OCI-LY7 (cell line): ENCODE measurements at regions of chr7 and their contacts with region 1.

Region 1: GRCh38 chr7:24381894-24382505 is 98.0 kb downstream of the NPY start:
- DNase-seq: peak; percentile 79
- H3K4me3 ChIP-seq: no peak overlapping the region
- H3K27ac ChIP-seq: no peak overlapping the region
- H3K4me1 ChIP-seq: peaks cover 12% of the 10 kb centered on the region
- CTCF ChIP-seq: peak; percentile 93

Region 2: GRCh38 chr7:23570592-23571200 is 811.3 kb before region 1 on chr7:
- CTCF ChIA-PET with region 1: no interaction called
- POLR2A ChIA-PET with region 1: no interaction called
- intact Hi-C with region 1: loop called (anchors 5 kb)
- DNase-seq: peak; percentile 71
- H3K4me3 ChIP-seq: no peak overlapping the region
- H3K27ac ChIP-seq: no peak overlapping the region
- H3K4me1 ChIP-seq: no peaks in the 10 kb centered on the region
- CTCF ChIP-seq: peak; percentile 94

Region 3: DNA sequence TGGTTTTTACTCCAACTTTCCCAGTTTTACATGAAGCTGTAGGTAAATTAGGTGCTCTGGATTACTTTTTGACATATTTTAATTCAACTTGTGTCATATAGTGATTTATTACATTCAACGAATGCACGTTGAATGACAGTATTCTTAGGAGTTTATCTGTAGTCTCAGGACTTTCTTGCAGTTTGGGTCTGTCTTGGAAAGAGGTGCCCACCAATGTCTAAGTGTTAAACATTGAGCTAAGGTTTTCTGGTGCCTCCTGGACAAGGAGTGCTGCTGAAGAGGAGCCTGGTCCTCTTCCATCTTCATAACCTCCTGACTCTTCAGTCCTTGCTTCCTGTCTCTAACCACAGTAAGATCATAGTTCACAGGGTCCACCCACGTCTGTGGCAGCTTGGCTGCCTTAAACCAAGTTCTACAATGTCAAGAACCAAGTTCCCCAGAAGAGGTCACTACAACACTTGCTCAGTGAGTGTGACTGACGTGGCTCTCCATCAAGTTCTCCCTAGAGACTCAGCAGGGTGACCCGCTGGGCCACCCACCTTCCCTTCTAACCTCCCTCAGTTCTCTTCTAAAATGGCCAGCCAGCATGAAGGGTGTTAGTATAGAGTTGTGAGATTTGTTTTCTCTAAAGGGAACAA is 91.9 kb before region 1 on chr7:
- CTCF ChIA-PET with region 1: interaction called, 8 read pairs
- POLR2A ChIA-PET with region 1: interaction called, 4 read pairs
- intact Hi-C with region 1: loop called (anchors 1 kb)
- DNase-seq: peak; percentile 90
- H3K4me3 ChIP-seq: no peak overlapping the region
- H3K27ac ChIP-seq: no peak overlapping the region
- H3K4me1 ChIP-seq: peaks cover 11% of the 10 kb centered on the region
- CTCF ChIP-seq: peak; percentile 91

Region 4: DNA sequence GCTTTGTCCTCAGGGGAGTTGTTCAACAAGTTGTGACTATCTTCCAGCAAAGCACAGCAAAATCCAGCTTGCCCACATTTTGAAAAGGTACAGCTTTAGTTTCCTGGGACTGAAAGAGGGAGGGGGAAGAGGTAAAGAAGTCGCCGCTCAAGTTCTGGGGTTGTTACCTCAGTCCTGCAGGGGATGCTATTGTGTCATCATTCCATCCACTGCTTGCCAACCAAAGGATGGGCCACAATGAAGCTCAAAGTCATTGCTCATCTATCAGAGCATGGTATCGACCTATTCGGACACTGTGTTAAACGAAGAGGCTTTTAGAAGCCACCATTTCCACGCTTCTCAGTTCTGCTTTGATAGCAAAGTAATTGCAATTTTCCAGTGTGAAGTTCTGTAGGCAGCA is 63.7 kb before region 1 on chr7:
- CTCF ChIA-PET with region 1: interaction called, 8 read pairs
- POLR2A ChIA-PET with region 1: interaction called, 3 read pairs
- intact Hi-C with region 1: loop called (anchors 1 kb)
- DNase-seq: peak; percentile 75
- H3K4me3 ChIP-seq: no peak overlapping the region
- H3K27ac ChIP-seq: no peak overlapping the region
- H3K4me1 ChIP-seq: peaks cover 29% of the 10 kb centered on the region
- CTCF ChIP-seq: peak; percentile 91

Region 5: GRCh38 chr7:24587848-24588247 is 205.8 kb after region 1 on chr7:
- CTCF ChIA-PET with region 1: no interaction called
- POLR2A ChIA-PET with region 1: no interaction called
- intact Hi-C with region 1: loop called (anchors 5 kb)
- DNase-seq: peak; percentile 71
- H3K4me3 ChIP-seq: no peak overlapping the region
- H3K27ac ChIP-seq: no peak overlapping the region
- H3K4me1 ChIP-seq: peaks cover 23% of the 10 kb centered on the region
- CTCF ChIP-seq: peak; percentile 96